ENCODE measurements at regions of chr17 and their contacts with region 1.

Region 1: GRCh38 chr17:35537601-35538141 is at the start of gene SLFN12L:
- DNase-seq: no peak
- H3K4me3 ChIP-seq: no peak within 1 kb of the TSS
- H3K27ac ChIP-seq: no peak within 1 kb of the TSS
- H3K4me1 ChIP-seq: no peaks in the 10 kb centered on the region
- H3K27me3 ChIP-seq: no peaks in the 10 kb centered on the region
- CTCF ChIP-seq: no peak

Region 2: GRCh38 chr17:35170968-35171771 is 366.5 kb before region 1 on chr17:
- intact Hi-C with region 1: loop called (anchors 10 kb)
- DNase-seq: peak in 1 of 2 donors; percentile 28
- H3K4me3 ChIP-seq: no peak overlapping the region
- H3K27ac ChIP-seq: no peak overlapping the region
- H3K4me1 ChIP-seq: no peaks in the 10 kb centered on the region
- H3K27me3 ChIP-seq: peaks cover 0 to 17% of the 10 kb centered on the region in 2 donors
- CTCF ChIP-seq: peak; percentile 9 to 43

Region 3: GRCh38 chr17:35312790-35313711 is 224.6 kb before region 1 on chr17:
- intact Hi-C with region 1: loop called (anchors 2 kb)
- DNase-seq: peak; percentile 31 to 68
- H3K4me3 ChIP-seq: peak overlapping the region; percentile 18 to 37
- H3K27ac ChIP-seq: peak overlapping the region in 1 of 2 donors; percentile 29
- H3K4me1 ChIP-seq: peaks cover 0 to 30% (median 29%) of the 10 kb centered on the region in 4 donors
- H3K27me3 ChIP-seq: no peaks in the 10 kb centered on the region
- CTCF ChIP-seq: peak; percentile 77 to 79

Region 4: DNA sequence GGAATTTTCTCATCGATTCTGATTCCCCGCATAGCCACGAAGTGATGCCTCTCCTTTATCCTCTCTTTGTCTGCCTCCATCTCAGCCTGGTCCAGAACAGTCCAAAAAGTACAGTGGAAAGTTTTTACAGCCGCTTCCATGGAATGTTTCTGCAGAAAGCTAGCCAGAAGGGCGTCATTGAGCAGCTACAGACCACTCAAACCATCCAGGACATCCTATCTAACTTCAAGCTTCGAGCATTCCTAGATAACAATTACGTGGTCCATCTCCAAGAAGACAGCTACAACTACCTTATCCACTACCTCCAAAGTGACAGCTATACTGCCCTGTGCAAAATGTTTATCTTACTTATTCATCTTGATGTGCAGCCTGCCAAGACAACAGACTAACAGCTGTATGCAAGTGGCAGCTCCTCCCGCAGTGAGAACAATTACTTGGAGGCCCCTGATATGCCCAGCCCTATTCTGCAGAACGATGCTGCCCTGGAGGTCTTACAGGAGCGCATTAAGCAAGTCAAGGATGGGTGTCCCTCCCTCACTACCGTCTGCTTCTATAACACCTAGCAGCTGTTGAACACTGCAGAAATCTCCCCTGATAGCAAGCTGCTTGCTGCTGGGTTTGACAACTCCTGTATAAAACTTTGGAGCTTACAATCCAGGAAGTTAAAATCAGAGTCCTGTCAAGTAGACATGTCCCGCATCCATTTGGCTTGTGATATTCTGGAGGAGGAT is 39.1 kb before region 1 on chr17:
- intact Hi-C with region 1: no loop called
- DNase-seq: no peak
- H3K4me3 ChIP-seq: no peak overlapping the region
- H3K27ac ChIP-seq: no peak overlapping the region
- H3K4me1 ChIP-seq: peaks cover 0 to 6% (median 3%) of the 10 kb centered on the region in 4 donors
- H3K27me3 ChIP-seq: peaks cover 6 to 75% of the 10 kb centered on the region in 2 donors
- CTCF ChIP-seq: no peak

Region 5: DNA sequence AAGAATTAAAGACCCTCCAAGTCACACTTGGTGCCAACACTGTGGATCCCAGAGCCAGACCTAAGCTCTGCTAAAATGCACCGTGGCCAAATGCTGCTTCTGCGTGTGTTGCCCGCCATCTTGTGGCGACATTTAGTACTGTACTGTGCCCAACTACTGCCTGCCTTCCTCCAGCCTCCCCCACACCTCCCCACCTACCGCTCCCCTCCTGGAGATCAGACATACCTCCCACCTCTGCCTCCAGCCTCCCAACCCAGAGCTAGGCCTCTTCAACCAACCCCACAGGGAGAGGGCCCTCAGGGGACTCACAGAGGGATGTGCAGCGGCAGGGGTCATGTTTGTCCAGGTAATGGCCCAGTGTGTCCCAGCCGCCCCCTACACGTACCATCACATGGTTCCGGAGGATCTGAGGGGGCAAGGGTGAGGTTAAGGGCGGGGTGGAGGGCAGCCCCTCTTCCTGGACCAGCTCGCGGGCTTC is 209.9 kb after region 1 on chr17:
- intact Hi-C with region 1: no loop called
- DNase-seq: peak; percentile 81
- H3K4me3 ChIP-seq: no peak overlapping the region
- H3K27ac ChIP-seq: no peak overlapping the region
- H3K4me1 ChIP-seq: peaks cover 0 to 19% (median 7%) of the 10 kb centered on the region in 4 donors
- H3K27me3 ChIP-seq: peaks cover 0 to 91% of the 10 kb centered on the region in 2 donors
- CTCF ChIP-seq: peak; percentile 95

Region 6: GRCh38 chr17:36214918-36215317 is 677.2 kb after region 1 on chr17:
- intact Hi-C with region 1: no loop called
- DNase-seq: no peak
- H3K4me3 ChIP-seq: no peak overlapping the region
- H3K27ac ChIP-seq: no peak overlapping the region
- H3K4me1 ChIP-seq: no peaks in the 10 kb centered on the region
- H3K27me3 ChIP-seq: peaks cover 0 to 6% of the 10 kb centered on the region in 2 donors
- CTCF ChIP-seq: no peak

Measured in tibial artery (tissue), 4 donors.